Left ventricle myocardium inferior (tissue), 1 donor: ENCODE measurements at regions of chr11 and their contacts with region 1.

Region 1: DNA sequence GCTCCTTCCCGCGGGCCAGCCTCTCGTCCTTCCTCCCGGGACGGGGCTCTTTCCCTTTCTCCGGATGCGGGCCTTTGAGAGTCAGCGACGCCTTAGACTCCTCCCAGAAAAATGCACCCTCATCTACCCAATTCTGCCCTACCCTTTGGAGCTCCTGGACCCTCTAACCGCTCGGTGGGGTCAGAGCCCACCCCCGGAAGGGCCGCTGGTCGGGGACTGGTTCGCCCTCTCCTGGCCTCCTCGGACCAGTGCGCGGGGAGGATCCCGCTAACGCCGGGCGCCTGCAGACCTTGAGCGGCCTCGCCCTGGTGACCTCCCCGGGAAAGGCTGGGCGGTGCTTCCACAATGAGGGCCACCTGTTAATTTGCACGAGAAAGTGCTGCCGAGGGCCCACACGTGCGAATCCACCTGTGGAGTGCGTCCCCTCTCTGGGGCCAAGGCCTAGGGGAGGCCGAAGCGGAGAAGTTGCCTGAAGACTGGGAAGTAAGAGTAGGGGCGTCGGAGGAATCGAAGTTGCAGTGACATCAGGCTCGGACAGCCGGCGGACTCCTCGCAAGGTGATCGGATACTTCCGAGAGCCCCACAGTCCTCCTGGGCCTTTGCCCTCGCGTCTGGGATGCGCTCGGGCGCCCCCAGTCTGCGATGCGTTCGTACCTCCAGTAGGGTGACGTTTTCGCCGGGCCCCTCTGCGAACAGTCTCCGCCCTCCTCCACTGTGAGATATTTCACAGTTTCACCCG is 61.5 kb downstream of the ENDOD1 start:
- DNase-seq: peak; percentile 88
- H3K4me3 ChIP-seq: peak overlapping the region; percentile 75
- H3K27ac ChIP-seq: peak overlapping the region; percentile 94
- H3K4me1 ChIP-seq: peaks cover 43% of the 10 kb centered on the region
- H3K27me3 ChIP-seq: no peaks in the 10 kb centered on the region
- CTCF ChIP-seq: peak; percentile 81

Region 2: GRCh38 chr11:94926698-94927237 is 224.3 kb before region 1 on chr11:
- intact Hi-C with region 1: no loop called
- DNase-seq: peak; percentile 87
- H3K4me3 ChIP-seq: no peak overlapping the region
- H3K27ac ChIP-seq: peak overlapping the region; percentile 86
- H3K4me1 ChIP-seq: peaks cover 50% of the 10 kb centered on the region
- H3K27me3 ChIP-seq: peaks cover under 1% of the 10 kb centered on the region
- CTCF ChIP-seq: no peak

Region 3: DNA sequence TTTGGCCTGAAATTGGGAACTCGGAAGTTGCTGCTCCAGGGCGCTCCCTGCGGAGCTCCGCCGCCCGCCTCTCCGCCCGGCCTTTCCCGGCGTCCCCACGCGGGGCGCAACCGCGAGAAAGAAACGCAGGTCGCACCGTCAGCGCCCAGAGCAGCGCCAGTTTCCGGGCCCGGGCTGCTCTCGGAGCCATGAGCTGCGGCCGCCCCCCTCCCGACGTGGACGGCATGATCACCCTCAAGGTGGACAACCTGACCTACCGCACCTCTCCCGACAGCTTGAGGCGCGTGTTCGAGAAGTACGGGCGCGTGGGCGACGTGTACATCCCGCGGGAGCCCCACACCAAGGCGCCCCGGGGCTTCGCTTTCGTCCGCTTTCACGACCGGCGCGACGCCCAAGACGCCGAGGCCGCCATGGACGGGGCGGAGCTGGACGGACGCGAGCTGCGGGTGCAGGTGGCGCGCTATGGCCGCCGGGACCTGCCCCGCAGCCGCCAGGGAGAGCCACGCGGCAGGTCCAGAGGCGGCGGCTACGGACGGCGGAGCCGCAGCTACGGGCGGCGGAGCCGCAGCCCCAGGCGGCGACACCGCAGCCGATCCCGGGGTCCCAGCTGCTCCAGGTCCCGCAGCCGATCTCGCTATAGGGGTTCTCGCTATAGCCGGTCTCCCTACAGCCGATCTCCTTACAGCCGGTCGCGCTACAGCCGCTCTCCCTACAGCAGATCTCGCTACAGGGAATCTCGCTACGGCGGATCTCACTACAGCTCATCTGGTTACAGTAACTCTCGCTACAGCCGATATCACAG is 83.9 kb before region 1 on chr11:
- intact Hi-C with region 1: loop called (anchors 5 kb)
- DNase-seq: peak; percentile 87
- H3K4me3 ChIP-seq: peak overlapping the region; percentile 89
- H3K27ac ChIP-seq: peak overlapping the region; percentile 98
- H3K4me1 ChIP-seq: peaks cover 45% of the 10 kb centered on the region
- H3K27me3 ChIP-seq: no peaks in the 10 kb centered on the region
- CTCF ChIP-seq: peak; percentile 72

Region 4: DNA sequence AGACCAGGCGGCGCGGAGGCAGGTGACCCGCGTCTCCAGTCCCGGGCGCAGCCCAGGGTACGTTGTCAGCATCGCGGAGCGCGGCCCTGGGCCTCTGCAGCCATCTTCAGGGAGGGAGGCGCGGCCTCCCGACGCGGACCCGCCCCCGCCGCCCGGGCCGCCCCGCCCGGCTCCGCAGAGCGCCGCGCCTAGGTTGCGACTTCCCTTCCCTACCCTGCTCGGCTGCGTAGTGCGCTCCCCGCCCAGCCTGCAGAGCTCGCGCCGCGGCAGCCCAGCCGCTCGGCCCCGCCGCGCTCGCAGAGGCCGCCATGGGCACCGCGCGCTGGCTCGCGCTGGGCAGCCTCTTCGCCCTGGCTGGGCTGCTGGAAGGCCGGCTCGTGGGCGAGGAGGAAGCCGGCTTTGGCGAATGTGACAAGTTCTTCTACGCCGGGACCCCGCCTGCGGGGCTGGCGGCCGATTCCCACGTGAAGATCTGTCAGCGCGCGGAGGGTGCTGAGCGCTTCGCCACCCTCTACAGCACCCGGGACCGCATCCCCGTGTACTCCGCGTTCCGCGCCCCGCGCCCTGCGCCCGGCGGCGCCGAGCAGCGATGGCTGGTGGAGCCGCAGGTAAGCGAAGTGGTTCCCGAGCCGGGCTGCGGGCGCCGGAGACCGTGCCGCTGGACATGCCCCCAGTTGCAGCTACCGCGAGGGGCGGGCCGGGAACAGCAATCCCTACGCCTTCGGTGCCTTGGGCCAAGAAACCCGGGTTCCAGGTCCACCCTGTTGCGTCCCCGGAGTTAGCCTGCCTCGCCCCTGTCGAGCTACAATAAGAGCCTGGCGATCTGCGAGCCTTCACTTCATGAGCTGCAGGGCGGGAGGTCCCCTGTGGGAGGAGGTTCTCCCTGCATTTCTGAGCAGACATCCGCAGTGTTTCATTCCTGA is 61.2 kb before region 1 on chr11 and contains the start of gene ENDOD1:
- intact Hi-C with region 1: loop called (anchors 10 kb)
- DNase-seq: peak; percentile 83
- H3K4me3 ChIP-seq: peak within 1 kb of the TSS; percentile 78
- H3K27ac ChIP-seq: peak within 1 kb of the TSS; percentile 92
- H3K4me1 ChIP-seq: peaks cover 51% of the 10 kb centered on the region
- H3K27me3 ChIP-seq: no peaks in the 10 kb centered on the region
- CTCF ChIP-seq: no peak
- total RNA-seq, gene ENDOD1: 11.3 TPM

Region 5: DNA sequence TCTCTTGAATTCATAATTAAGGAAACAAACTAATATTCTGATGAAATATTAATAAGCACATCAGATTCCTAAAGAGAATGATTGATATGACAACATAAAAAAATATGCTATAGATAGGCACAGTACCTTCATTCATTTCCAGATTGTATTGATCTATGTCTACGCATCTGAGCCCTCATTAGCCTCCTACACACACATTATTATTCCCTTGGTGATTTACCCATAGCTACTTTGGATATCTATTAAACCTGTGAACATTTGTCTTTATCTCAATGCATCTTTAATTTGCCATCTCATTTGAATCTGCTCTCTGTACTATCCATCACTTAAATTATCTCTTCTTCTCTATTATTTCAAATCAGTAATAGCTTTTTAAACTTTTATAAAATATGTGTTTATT is 61.5 kb after region 1 on chr11:
- intact Hi-C with region 1: no loop called
- DNase-seq: no peak
- H3K4me3 ChIP-seq: no peak overlapping the region
- H3K27ac ChIP-seq: no peak overlapping the region
- H3K4me1 ChIP-seq: no peaks in the 10 kb centered on the region
- H3K27me3 ChIP-seq: no peaks in the 10 kb centered on the region
- CTCF ChIP-seq: no peak

Region 6: DNA sequence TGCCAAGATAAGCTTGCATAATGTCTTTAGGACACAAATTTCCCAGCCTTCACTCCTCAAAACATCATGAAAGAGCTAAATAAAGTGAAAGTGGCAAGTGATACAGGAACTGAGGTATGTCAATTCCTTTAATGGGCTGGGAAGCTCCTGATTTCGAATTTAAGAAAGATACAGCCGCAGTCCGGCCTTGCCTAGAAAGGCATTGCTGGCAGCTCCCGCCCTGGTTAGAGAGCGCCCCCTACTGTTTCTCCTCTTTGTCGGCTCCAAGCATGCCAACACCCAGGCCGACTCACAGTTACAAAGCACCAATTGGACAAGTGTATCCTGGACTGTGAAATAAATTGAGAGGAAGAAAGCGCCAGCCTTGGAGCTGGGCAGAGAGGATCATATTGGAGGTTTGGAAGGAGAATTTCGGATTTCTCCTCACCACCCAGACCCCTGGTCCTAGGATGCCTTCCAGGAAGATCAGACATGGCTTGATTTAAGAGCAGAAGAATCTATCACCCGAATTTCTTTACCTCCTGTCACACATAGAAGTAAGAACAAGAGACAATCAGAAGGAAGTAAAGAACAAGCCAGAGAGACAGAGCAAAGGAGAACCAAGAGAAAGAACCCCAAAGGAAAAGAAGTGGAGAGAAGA is 554.5 kb after region 1 on chr11:
- intact Hi-C with region 1: loop called (anchors 5 kb)
- DNase-seq: peak; percentile 82
- H3K4me3 ChIP-seq: no peak overlapping the region
- H3K27ac ChIP-seq: peak overlapping the region; percentile 59
- H3K4me1 ChIP-seq: peaks cover 6% of the 10 kb centered on the region
- H3K27me3 ChIP-seq: no peaks in the 10 kb centered on the region
- CTCF ChIP-seq: peak; percentile 95

Region 7: DNA sequence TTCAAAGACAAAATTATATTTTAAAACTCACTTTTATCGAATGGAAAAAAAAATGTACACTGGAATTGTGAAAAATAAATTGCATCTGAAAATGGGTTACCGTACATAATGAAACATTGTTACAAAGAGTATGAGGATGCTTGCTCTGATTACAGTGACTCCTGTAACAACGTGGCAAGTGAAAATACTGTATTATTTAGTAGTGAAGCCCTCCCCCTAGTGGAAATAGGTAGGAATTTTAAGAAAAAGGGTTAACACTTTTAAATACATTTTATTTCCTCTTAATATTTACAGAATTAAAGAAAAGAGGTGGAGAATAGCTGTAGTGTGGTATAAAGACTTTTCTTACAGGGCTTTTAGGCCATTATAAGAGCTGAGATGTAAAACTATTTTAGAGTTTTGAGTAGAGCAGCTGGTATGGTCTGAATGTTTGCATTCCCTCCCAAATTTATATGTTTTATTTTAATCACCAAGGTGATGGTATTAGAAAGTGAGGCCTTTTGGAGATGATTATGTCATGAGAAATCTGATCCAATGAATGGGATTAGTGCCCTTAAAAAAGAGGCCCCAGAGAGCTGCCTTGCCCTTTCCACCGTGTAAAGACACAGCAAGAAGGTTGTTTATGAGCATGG is 613.3 kb after region 1 on chr11:
- intact Hi-C with region 1: loop called (anchors 5 kb)
- DNase-seq: no peak
- H3K4me3 ChIP-seq: no peak overlapping the region
- H3K27ac ChIP-seq: no peak overlapping the region
- H3K4me1 ChIP-seq: no peaks in the 10 kb centered on the region
- H3K27me3 ChIP-seq: peaks cover 21% of the 10 kb centered on the region
- CTCF ChIP-seq: peak; percentile 72